PC-9 (cell line): ENCODE measurements at regions of chr14 and their contacts with region 1.

Region 1: GRCh38 chr14:73741386-73741875 is 27.2 kb upstream of the PNMA1 start:
- DNase-seq: peak; percentile 84 to 93
- H3K4me3 ChIP-seq: peak overlapping the region; percentile 46; the same call in 1 of the 2 replicates
- H3K27ac ChIP-seq: peak overlapping the region; percentile 90
- H3K4me1 ChIP-seq: peaks cover 71% of the 10 kb centered on the region
- H3K27me3 ChIP-seq: no peaks in the 10 kb centered on the region
- CTCF ChIP-seq: no peak

Region 2: DNA sequence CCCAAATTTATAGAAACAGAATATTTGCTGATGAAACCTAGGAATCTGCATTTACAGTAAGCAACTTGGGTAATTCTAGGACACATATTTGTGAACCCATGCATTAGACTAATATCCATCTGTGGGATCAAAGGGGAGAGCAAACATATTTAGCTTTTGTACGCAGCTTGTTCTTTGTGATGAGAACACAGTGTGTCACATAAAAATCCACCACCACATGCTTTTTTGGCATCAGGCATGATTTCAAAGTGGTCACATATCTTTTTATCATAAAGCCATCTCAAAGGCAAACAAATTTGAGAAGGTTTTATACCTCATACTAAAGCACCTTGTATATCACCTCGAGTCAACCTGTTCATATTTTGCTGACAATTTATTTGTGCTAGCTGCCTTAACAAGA is 80.9 kb before region 1 on chr14:
- CTCF ChIA-PET with region 1: no interaction called
- POLR2A ChIA-PET with region 1: no interaction called
- intact Hi-C with region 1: no loop called
- DNase-seq: no peak
- H3K4me3 ChIP-seq: no peak overlapping the region
- H3K27ac ChIP-seq: no peak overlapping the region
- H3K4me1 ChIP-seq: peaks cover 22% of the 10 kb centered on the region
- H3K27me3 ChIP-seq: no peaks in the 10 kb centered on the region
- CTCF ChIP-seq: no peak

Region 3: GRCh38 chr14:73753959-73754882 is 12.8 kb after region 1 on chr14:
- CTCF ChIA-PET with region 1: interaction called, 9 read pairs
- POLR2A ChIA-PET with region 1: interaction called, 16 read pairs
- intact Hi-C with region 1: loop called (anchors 1 kb)
- DNase-seq: no peak
- H3K4me3 ChIP-seq: no peak overlapping the region
- H3K27ac ChIP-seq: peak overlapping the region; percentile 90
- H3K4me1 ChIP-seq: peaks cover 79% of the 10 kb centered on the region
- H3K27me3 ChIP-seq: no peaks in the 10 kb centered on the region
- CTCF ChIP-seq: no peak

Region 4: DNA sequence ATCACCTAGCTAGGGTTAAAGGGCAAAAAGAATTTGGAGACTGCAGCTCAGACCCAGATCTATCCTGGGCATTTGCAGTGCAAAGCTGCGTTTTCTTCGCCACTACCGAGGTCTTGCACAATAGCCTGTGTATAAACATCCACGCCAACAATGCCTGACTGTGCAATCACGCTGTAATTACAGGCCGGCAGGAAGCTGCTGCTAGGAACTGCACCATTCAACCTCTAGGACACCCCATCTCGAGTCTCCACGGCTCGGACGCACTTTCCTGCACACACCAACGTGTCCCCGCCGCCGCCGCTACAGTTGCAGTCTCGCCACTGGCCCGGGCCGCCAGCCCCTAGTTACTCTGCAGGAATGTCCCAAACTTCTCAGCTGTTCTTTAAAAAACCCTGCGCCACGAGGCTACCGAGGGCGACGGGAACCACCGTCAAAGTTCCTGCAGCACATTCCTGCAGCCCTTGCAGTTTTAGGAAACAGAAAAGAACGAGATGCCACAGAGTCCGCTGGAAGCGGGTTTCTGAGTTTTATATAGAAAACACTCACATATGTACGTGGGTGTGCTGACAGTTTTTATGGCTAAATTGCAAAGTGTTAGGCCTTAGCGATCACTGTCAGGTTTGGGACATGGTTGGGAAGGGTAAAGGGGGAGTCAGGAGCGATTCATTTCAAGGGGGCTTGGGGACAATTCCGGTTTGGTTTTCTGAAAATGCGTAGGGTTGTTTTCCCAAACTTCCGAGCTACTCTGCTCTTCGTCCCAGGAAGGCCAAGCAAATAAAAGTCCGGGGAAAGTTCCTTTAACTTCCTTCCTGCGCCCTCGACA is 44.7 kb after region 1 on chr14:
- CTCF ChIA-PET with region 1: interaction called, 6 read pairs
- POLR2A ChIA-PET with region 1: no interaction called
- intact Hi-C with region 1: loop called (anchors 5 kb)
- DNase-seq: peak; percentile 61 to 85
- H3K4me3 ChIP-seq: peak overlapping the region; percentile 71
- H3K27ac ChIP-seq: peak overlapping the region; percentile 77
- H3K4me1 ChIP-seq: peaks cover 38% of the 10 kb centered on the region
- H3K27me3 ChIP-seq: no peaks in the 10 kb centered on the region
- CTCF ChIP-seq: peak; percentile 43; the same call in 1 of the 2 replicates

Region 5: GRCh38 chr14:73851644-73852382 is 110.4 kb after region 1 on chr14 and contains the start of gene PTGR2:
- CTCF ChIA-PET with region 1: no interaction called
- POLR2A ChIA-PET with region 1: interaction called, 18 read pairs
- intact Hi-C with region 1: no loop called
- DNase-seq: peak; percentile 90 to 98
- H3K4me3 ChIP-seq: peak within 1 kb of the TSS; percentile 68
- H3K27ac ChIP-seq: peak within 1 kb of the TSS; percentile 89
- H3K4me1 ChIP-seq: peaks cover 32% of the 10 kb centered on the region
- H3K27me3 ChIP-seq: no peaks in the 10 kb centered on the region
- CTCF ChIP-seq: no peak
- total RNA-seq, gene PTGR2: 19.5 and 21.8 TPM in 2 replicates

Region 6: DNA sequence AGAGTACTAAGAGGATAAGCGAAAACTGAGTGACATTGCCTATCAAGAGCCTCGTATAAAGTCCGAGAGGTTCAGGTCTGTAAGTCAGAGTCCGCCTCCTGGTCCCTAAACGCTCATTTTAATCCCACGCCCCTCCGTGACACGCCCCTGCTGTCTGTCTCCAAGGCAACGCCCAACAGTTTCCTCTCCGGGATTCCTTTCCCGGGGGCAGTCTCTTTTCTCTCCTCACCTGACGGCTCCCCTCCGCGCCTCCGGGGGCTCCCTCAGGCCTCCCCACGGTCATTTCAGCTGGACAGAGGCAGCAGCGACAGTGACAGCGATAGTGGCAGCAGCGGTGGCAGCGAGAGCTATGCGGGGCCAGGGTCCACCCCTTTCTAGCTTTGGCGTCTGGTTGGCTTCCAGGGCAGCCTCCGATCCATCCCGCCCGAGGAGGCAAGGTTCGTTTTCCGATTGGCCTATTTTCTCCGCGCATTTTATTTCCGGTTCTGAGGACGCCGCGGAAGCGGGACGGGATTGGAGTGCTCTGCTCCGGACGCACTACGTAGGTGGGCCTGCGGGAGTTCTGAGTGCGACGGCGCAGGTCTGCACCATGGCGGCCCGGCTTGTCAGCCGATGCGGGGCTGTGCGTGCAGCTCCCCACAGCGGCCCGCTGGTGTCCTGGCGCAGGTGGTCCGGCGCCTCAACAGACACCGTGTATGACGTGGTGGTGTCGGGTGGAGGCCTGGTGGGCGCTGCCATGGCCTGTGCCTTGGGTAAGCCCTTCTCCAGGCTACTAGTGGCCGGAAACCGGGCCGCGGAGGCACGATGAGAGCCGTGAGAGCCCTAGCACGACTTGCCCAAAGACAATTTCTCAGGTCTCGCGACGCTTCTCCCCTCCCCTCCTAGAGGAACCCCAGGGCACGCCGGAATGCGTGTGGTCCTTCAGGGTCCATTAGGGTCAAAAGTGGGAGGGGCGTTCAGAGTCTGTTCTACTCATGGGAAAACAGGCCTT is 208.6 kb after region 1 on chr14 and contains the starts of genes COQ6 and FAM161B:
- CTCF ChIA-PET with region 1: no interaction called
- POLR2A ChIA-PET with region 1: no interaction called
- intact Hi-C with region 1: loop called (anchors 1 kb)
- DNase-seq: peak; percentile 95 to 96
- H3K4me3 ChIP-seq: peak within 1 kb of the TSS; percentile 83
- H3K27ac ChIP-seq: peak within 1 kb of the TSS; percentile 69
- H3K4me1 ChIP-seq: peaks cover 6% of the 10 kb centered on the region; the same call in 1 of the 2 replicates
- H3K27me3 ChIP-seq: no peaks in the 10 kb centered on the region
- CTCF ChIP-seq: no peak
- total RNA-seq, gene COQ6: 25.4 and 25.7 TPM in 2 replicates
- total RNA-seq, gene FAM161B: 1.6 TPM in 2 replicates